ENCODE measurements at regions of chr9 and their contacts with region 1.

Region 1: DNA sequence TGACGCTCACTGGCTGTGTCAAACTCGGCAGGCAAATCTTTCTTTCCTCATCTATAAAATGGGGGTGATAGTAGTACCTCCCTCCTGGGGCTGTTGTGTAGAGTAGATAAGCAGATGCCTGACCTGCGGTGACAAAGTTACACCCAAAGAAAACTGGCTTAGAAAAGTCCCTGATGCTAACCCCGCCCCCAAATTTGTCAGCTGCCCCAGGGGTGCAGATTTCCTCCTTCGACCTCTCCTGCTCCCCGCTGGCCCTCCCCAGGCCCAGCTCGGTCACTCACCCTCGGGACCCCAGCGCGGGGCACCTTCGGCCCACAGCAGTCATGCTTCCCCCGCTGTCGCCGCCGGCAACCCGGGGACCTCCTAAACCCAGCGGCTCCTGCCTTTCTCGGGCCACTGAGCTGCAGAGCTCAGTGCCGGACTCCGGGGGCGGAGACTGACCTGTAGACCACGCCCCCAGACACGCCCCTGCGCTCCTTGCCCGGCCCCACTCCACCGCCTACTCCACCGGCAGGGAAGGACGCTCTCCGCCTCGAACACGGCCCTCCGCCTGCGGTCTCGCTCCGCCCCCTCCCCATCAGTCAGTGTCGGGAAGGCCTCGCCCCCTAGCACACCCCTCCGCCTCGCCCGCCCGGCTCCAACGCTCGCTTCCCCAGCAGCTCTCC is 7.4 kb downstream of the SH2D3C start:
- DNase-seq: peak; percentile 94 to 100
- H3K4me3 ChIP-seq: peak overlapping the region; percentile 72
- H3K27ac ChIP-seq: no peak overlapping the region
- H3K4me1 ChIP-seq: peaks cover 7% of the 10 kb centered on the region
- H3K27me3 ChIP-seq: peaks cover 8% of the 10 kb centered on the region; the same call in 1 of the 2 replicates
- CTCF ChIP-seq: no peak

Region 2: GRCh38 chr9:127489471-127490115 is 281.4 kb before region 1 on chr9:
- CTCF ChIA-PET with region 1: no interaction called
- POLR2A ChIA-PET with region 1: no interaction called
- intact Hi-C with region 1: no loop called
- DNase-seq: no peak
- H3K4me3 ChIP-seq: no peak overlapping the region
- H3K27ac ChIP-seq: no peak overlapping the region
- H3K4me1 ChIP-seq: no peaks in the 10 kb centered on the region
- H3K27me3 ChIP-seq: no peaks in the 10 kb centered on the region
- CTCF ChIP-seq: no peak

Region 3: DNA sequence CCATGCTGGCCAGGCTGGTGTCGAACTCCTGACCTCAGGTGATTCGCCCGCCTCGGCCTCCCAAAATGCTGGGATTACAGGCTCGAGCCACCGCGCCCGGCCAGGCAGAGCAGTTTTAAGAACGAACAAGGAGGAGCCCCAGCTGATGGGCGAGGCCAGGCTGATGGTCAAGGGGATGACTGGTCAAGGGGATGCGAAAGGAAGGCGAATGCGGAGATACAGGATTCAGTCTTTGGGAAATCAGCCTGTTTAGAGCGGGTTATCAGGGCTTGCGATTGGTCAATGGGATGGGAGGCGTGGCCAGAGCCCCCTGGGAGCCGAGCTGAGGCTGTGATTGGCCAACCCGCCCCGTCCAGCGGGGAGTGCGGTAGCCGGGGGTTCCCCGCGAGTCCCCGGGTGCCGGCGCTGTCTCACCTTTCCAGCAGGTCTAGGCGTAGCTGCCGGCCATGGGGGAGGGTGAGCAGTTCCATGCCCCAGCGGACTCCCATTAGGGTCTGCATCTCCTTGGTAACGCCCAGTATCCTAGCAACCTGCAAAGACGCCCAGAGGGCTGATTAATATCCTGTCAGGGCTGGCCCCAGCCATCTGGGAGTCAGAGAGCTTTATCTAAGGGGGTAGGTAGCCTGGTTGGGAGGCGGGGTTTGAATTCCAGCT is 28.5 kb before region 1 on chr9:
- CTCF ChIA-PET with region 1: interaction called, 6 read pairs
- POLR2A ChIA-PET with region 1: interaction called, 6 read pairs
- intact Hi-C with region 1: loop called (anchors 1 kb)
- DNase-seq: peak; percentile 49 to 68
- H3K4me3 ChIP-seq: no peak overlapping the region
- H3K27ac ChIP-seq: no peak overlapping the region
- H3K4me1 ChIP-seq: peaks cover 24% of the 10 kb centered on the region
- H3K27me3 ChIP-seq: peaks cover 13% of the 10 kb centered on the region; the same call in 1 of the 2 replicates
- CTCF ChIP-seq: no peak

Region 4: GRCh38 chr9:127754099-127755050 is 16.7 kb before region 1 on chr9:
- CTCF ChIA-PET with region 1: no interaction called
- POLR2A ChIA-PET with region 1: no interaction called
- intact Hi-C with region 1: no loop called
- DNase-seq: no peak
- H3K4me3 ChIP-seq: no peak overlapping the region
- H3K27ac ChIP-seq: no peak overlapping the region
- H3K4me1 ChIP-seq: no peaks in the 10 kb centered on the region
- H3K27me3 ChIP-seq: peaks cover 49% of the 10 kb centered on the region
- CTCF ChIP-seq: no peak

Region 5: DNA sequence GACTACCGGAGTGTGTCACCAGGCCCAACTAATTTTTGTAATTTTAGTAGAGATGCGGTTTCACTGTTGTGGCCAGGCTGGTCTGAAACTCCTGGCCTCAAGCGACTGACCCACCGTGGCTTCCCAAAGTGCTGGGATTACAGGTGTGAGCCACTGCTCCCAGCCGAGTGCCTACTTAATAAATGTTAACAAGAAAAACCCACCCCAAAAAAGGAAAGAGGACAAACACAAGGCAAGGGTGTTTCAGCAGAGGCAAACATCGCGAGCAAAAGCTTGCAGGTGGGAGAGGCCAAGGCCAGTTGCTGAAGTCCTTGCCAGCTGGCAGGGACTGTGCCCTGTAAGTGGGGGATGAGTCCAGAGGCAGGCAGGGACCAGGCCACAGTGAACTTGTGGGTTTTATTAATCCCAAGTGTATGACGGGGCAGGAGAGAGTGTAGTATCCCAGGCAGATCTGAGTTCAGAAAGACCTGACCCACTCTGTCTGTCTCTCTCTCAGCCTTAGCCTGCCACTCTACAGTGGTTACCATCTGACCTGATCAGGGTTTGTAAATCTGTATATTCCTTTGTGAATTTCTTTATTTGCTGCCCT is 25.3 kb after region 1 on chr9:
- CTCF ChIA-PET with region 1: no interaction called
- POLR2A ChIA-PET with region 1: interaction called, 21 read pairs
- intact Hi-C with region 1: no loop called
- DNase-seq: no peak
- H3K4me3 ChIP-seq: no peak overlapping the region
- H3K27ac ChIP-seq: no peak overlapping the region
- H3K4me1 ChIP-seq: peaks cover 21% of the 10 kb centered on the region
- H3K27me3 ChIP-seq: no peaks in the 10 kb centered on the region
- CTCF ChIP-seq: no peak

Measured in PC-9 (cell line).